PC-3 (cell line): ENCODE measurements at regions of chr13 and their contacts with region 1.

Region 1: DNA sequence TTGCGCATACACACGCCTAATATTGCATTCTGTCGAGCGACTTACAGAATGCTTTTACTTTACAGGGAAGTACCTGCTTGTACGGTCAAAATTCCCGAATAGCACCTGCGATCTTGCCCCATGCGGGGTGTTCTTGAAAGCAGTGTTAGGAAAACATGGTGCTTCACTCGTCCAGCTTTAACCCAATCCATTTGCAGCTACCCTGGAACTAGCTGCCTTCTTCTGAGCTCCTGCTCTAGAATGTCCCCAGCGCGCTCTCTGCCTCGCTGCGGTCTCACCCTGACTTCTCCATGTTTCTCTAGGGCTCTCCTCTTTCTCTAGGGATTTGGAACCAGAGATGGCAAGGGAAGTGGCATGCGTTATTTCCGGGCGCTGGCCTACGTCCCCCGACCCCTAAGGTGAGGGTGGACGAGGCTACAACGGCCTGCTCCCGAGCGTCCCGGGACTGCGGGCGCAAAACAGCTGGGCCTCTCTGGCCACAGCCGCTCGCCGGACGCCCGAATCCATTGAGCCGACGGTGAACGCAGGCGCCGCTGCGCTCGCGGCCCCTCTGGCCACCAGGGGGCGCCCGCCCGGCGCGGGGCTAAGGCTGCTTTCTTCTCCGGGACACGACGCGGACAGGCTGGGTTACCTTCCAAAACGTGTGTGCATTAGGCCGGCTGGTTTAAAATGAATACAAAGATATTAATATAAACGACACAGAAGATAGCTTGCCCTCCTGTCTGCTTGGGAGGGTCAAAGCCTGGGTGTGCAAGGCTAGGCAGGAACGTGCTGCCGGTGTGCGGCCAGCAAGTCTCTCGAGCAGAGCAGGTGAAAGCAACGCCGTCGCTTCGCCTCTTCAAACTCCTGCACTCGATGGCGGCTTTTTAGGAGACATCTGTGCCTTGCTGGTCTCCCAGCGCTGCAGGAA is 1.8 kb upstream of the SPRY2 start:
- DNase-seq: peak; percentile 82
- ATAC-seq: peak; percentile 40
- H3K4me3 ChIP-seq: peak overlapping the region; percentile 99
- H3K27ac ChIP-seq: peak overlapping the region; percentile 52
- H3K4me1 ChIP-seq: peaks cover 7% of the 10 kb centered on the region
- H3K27me3 ChIP-seq: no peaks in the 10 kb centered on the region
- CTCF ChIP-seq: peak; percentile 73

Region 2: DNA sequence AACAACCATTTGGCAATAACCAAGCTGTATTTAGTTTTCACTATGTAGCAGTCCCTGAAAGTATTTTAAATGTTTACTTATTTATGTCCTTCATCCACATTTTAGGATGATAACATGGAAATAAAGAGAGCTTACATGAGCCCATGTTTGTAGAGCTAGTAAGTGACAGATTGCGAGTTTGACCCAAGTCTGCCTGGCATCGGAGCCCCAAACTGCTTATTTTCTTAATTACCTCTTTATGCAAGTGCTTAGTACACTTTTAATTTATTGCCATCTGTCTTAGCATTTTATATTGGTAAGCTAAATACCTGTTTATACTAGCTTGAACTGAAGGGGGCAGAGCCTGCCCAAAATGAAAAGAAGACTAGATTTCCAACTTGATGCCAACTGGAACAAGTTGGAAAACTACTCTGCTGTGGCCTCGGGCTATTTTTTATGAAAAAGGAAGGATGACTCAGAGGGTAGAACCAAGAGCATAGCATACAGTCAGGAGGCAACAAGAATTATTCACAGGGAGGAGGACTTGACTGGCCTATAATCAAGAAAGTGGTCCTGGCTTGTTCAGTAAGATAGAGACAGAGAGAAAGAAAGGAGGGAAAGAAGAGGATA is 711.6 kb before region 1 on chr13:
- CTCF ChIA-PET with region 1: interaction called, 5 read pairs
- POLR2A ChIA-PET with region 1: no interaction called
- intact Hi-C with region 1: loop called (anchors 1 kb)
- DNase-seq: peak; percentile 95
- ATAC-seq: peak; percentile 99
- H3K4me3 ChIP-seq: no peak overlapping the region
- H3K27ac ChIP-seq: no peak overlapping the region
- H3K4me1 ChIP-seq: peaks cover 4% of the 10 kb centered on the region; the same call in 1 of the 2 replicates
- H3K27me3 ChIP-seq: no peaks in the 10 kb centered on the region
- CTCF ChIP-seq: peak; percentile 70

Region 3: DNA sequence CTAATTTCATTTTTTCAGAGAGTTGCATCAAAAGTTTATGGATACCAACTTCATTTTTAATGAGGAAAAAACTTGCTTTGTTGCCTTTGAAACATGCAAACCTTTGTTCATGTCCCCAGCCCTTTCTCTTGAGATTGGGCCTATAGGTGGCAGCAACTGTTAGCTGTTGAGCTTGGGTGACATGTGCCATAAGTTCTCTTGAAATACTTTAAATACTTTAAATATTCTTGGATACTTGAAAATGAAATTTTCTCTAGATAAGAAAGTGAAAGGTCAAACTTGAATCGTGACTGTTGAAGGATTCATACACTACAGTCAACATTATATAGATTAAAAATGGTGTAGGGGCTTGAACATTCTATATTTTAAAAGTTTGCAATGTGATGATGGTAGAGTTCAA is 566.9 kb before region 1 on chr13:
- CTCF ChIA-PET with region 1: no interaction called
- POLR2A ChIA-PET with region 1: no interaction called
- intact Hi-C with region 1: loop called (anchors 1 kb)
- DNase-seq: peak; percentile 73
- ATAC-seq: peak; percentile 88
- H3K4me3 ChIP-seq: no peak overlapping the region
- H3K27ac ChIP-seq: peak overlapping the region; percentile 43
- H3K4me1 ChIP-seq: peaks cover 21% of the 10 kb centered on the region
- H3K27me3 ChIP-seq: no peaks in the 10 kb centered on the region
- CTCF ChIP-seq: peak; percentile 84

Region 4: GRCh38 chr13:79988573-79988972 is 354.2 kb before region 1 on chr13:
- CTCF ChIA-PET with region 1: no interaction called
- POLR2A ChIA-PET with region 1: interaction called, 11 read pairs
- intact Hi-C with region 1: loop called (anchors 1 kb)
- DNase-seq: peak; percentile 69
- ATAC-seq: peak; percentile 56
- H3K4me3 ChIP-seq: peak overlapping the region; percentile 42; the same call in 1 of the 2 replicates
- H3K27ac ChIP-seq: peak overlapping the region; percentile 100
- H3K4me1 ChIP-seq: peaks cover 43% of the 10 kb centered on the region
- H3K27me3 ChIP-seq: no peaks in the 10 kb centered on the region
- CTCF ChIP-seq: no peak

Region 5: GRCh38 chr13:80083853-80084676 is 258.7 kb before region 1 on chr13:
- CTCF ChIA-PET with region 1: no interaction called
- POLR2A ChIA-PET with region 1: interaction called, 3 read pairs
- intact Hi-C with region 1: loop called (anchors 1 kb)
- DNase-seq: peak; percentile 64
- ATAC-seq: no peak
- H3K4me3 ChIP-seq: no peak overlapping the region
- H3K27ac ChIP-seq: peak overlapping the region; percentile 98
- H3K4me1 ChIP-seq: peaks cover 59% of the 10 kb centered on the region
- H3K27me3 ChIP-seq: no peaks in the 10 kb centered on the region
- CTCF ChIP-seq: no peak

Region 6: DNA sequence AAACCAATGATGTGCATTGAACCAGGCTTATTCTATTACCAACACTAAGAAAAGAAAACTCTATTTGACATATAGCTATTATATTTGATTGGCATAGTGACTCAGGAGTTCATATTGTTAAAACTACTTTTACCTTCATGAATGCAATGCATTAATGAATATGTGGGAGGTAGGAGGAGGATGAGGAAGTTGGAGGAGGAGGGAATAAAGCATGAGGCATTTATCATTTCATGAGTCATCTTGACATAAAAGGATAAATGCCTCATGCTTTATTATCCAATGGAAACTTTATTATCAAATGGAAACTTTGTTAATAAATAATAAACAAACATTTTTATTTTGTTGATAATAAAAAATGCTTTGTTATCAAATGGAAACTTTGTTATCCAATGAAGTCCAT is 118.3 kb before region 1 on chr13:
- CTCF ChIA-PET with region 1: no interaction called
- POLR2A ChIA-PET with region 1: interaction called, 8 read pairs
- intact Hi-C with region 1: loop called (anchors 10 kb)
- DNase-seq: peak; percentile 82
- ATAC-seq: peak; percentile 81
- H3K4me3 ChIP-seq: no peak overlapping the region
- H3K27ac ChIP-seq: peak overlapping the region; percentile 55
- H3K4me1 ChIP-seq: peaks cover 12% of the 10 kb centered on the region; the same call in 1 of the 2 replicates
- H3K27me3 ChIP-seq: no peaks in the 10 kb centered on the region
- CTCF ChIP-seq: no peak

Region 7: DNA sequence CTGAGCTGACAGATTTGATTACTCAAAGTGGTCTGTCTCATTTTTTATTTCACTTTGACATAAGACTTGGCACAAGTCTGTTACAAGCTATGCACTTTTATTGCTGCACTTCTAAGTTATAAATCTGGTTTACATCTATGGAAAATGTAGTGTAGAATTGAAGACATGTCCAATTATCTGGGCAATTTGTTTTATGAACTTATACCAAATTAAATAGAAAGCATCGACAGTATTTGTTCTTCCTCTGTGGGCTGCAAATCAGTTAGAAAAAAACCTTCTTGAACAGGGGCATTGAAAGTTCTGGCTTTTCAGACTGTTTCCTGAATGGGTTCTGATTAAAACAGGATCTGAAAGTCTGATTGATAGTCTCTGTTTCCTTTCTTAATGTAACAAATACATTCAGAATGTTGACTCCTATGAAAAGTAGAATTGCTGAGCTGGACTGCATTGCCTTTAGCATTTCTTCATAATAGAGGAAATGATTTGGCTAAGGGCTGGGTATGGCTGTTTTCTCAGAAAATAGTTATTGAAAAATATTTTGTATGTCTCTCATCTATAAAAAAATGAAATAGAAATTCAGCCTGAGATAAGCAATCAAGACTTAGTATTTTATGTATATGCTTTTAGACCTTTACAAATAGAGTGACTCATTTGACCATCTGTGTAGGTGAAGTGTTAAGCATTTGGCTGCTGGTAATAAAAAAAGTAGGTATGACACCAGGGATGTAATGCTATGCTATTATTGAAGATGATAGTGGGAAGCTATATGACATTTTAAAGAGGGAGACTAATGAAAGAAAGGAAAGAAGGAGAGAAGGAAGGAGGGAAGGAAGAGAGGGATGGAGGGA is 209.1 kb after region 1 on chr13:
- CTCF ChIA-PET with region 1: no interaction called
- POLR2A ChIA-PET with region 1: no interaction called
- intact Hi-C with region 1: no loop called
- DNase-seq: peak; percentile 44
- ATAC-seq: peak; percentile 78
- H3K4me3 ChIP-seq: no peak overlapping the region; the same call in 1 of the 2 replicates
- H3K27ac ChIP-seq: peak overlapping the region; percentile 45
- H3K4me1 ChIP-seq: peaks cover 22% of the 10 kb centered on the region
- H3K27me3 ChIP-seq: no peaks in the 10 kb centered on the region
- CTCF ChIP-seq: no peak

Region 8: DNA sequence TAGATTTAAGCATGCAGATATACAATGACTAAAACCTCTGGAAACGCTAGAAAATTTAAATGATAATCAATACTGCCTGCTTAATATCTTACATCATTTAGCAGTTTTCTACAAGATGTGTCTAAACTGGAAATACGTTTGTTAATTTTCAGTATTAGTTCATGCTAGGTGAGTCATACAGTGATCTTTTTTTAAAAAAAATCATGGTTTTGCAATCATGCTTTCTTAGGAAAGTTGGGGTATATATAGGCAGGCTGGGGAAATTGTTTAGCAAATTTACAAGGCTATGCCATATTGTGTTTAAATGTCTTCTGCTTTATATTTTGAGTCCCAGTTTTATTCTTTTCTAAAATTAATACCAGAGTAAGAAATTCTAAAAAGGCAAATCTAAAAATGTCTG is 243.6 kb after region 1 on chr13:
- CTCF ChIA-PET with region 1: no interaction called
- POLR2A ChIA-PET with region 1: no interaction called
- intact Hi-C with region 1: no loop called
- DNase-seq: no peak
- ATAC-seq: no peak
- H3K4me3 ChIP-seq: no peak overlapping the region
- H3K27ac ChIP-seq: no peak overlapping the region
- H3K4me1 ChIP-seq: no peaks in the 10 kb centered on the region
- H3K27me3 ChIP-seq: no peaks in the 10 kb centered on the region
- CTCF ChIP-seq: no peak

Region 9: GRCh38 chr13:80979035-80979641 is 636.4 kb after region 1 on chr13:
- CTCF ChIA-PET with region 1: no interaction called
- POLR2A ChIA-PET with region 1: interaction called, 4 read pairs
- intact Hi-C with region 1: loop called (anchors 5 kb)
- DNase-seq: peak; percentile 67
- ATAC-seq: peak; percentile 68
- H3K4me3 ChIP-seq: no peak overlapping the region
- H3K27ac ChIP-seq: no peak overlapping the region
- H3K4me1 ChIP-seq: no peaks in the 10 kb centered on the region
- H3K27me3 ChIP-seq: no peaks in the 10 kb centered on the region
- CTCF ChIP-seq: peak; percentile 84